Activated CD4-positive, alpha-beta T cell treated with anti-CD3 and anti-CD28 coated beads, Interleukin-2, amount 10 ng/mL, durations not matched to agents 24 days and 14 days (primary cell): ENCODE measurements at regions of chr9 and their contacts with region 1.

Region 1: GRCh38 chr9:98204692-98205091 is 12.3 kb upstream of the CORO2A start:
- DNase-seq: no peak
- H3K4me3 Mint-ChIP-seq: no peak overlapping the region
- H3K27ac Mint-ChIP-seq: no peak overlapping the region
- H3K4me1 Mint-ChIP-seq: peaks cover 5% of the 10 kb centered on the region
- H3K27me3 Mint-ChIP-seq: no peaks in the 10 kb centered on the region

Region 2: DNA sequence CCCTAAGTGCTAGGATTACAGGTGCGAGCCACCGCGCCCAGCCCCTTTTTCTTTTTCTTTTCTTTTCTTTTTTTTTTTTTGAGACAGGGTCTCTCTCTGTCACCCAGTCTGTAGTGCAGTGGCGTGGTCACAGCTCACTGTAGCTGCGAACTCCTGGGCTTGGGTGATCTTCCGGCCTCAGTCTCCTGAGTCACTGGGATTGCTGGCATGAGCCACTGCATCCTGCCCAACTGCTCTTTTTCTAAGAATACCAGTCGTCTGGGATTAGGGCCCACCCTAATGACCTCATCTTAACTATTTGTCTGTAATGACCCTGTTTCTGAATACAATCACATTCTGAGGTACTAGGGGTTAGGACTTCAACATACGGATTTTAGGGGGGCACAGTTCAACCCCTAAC is 182.2 kb before region 1 on chr9:
- intact Hi-C with region 1: no loop called
- DNase-seq: no peak
- H3K4me3 Mint-ChIP-seq: no peak overlapping the region
- H3K27ac Mint-ChIP-seq: no peak overlapping the region
- H3K4me1 Mint-ChIP-seq: no peaks in the 10 kb centered on the region
- H3K27me3 Mint-ChIP-seq: no peaks in the 10 kb centered on the region

Region 3: DNA sequence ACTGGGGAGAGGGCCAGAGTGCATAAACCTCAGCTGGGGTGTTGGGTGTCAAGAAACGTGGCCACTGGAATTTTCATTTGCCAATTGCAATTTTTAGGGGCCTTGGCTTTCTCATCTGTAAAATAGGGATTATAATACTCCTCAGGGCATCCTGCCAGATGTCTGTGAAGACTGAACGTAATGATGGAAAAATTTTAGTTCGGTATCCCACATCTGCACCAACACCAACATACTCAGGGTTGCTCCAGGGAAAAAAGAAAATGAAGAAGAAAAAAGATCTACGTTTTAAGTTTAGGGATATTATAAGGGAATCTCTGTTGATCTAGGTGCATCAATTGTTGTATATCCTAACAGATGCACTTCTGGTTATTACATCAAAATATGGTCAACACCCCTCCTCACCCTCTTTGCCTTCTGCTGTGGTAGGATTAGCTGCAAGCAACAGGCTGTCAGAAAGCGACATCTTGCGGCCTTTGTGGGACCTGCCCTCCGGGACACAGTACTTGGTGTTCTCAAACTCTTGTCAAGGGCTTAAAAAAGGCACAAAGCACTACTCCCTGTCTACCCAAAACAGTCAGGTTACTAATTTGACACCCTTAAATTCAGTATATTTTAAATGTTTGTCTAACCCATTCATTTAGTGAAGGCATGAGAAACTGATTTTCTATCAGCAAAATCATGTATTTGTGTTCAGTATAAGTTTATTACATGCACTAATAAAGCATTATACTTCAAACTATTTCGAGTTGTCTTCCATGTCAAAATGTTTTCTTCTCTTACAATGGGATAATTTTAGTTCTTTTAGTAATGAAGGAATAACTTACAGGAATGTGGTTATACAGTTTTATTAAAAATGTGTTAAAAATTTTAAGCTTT is 59.0 kb after region 1 on chr9:
- intact Hi-C with region 1: loop called (anchors 1 kb)
- DNase-seq: peak; percentile 95
- H3K4me3 Mint-ChIP-seq: no peak overlapping the region
- H3K27ac Mint-ChIP-seq: no peak overlapping the region
- H3K4me1 Mint-ChIP-seq: peaks cover 2% of the 10 kb centered on the region
- H3K27me3 Mint-ChIP-seq: peaks cover 23% of the 10 kb centered on the region